T-cell (primary cell): ENCODE measurements at regions of chr20 and their contacts with region 1.

Region 1: GRCh38 chr20:50713657-50714101 is 17.7 kb upstream of the PARD6B start:
- DNase-seq: no peak
- ATAC-seq: no peak
- H3K4me3 ChIP-seq: no peak overlapping the region
- H3K4me3 Mint-ChIP-seq: no peak overlapping the region
- H3K27ac ChIP-seq: no peak overlapping the region
- H3K27ac Mint-ChIP-seq: no peak overlapping the region
- H3K4me1 ChIP-seq: no peaks in the 10 kb centered on the region
- H3K4me1 Mint-ChIP-seq: no peaks in the 10 kb centered on the region
- H3K27me3 ChIP-seq: peaks cover 0 to 28% of the 10 kb centered on the region in 2 experiments
- H3K27me3 Mint-ChIP-seq: peaks cover 26 to 37% of the 10 kb centered on the region in 2 donors

Region 2: DNA sequence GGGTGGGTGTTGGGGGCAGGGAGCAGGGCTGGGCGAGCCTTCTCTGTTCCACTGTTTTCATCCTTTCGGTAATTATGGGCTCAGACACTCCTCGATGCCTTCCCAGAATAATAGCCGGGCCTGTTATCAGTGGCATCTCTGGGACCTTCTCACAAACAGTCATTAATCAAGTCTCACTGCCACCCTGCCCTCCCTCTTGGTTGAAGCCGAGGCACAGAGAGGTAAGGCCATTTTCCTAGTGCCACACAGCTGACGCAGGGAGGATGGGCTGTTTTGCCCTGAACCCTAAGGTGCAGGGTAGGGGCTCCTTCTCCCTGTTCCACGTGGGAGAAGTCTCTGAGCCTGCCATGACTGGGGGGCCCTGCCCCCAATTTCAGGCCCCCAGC is 480.4 kb before region 1 on chr20:
- CTCF ChIA-PET with region 1: interaction called in 1 of 2 experiments, 7 read pairs
- POLR2A ChIA-PET with region 1: interaction called in 1 of 2 experiments, 10 read pairs
- DNase-seq: no peak
- ATAC-seq: no peak
- H3K4me3 ChIP-seq: no peak overlapping the region
- H3K4me3 Mint-ChIP-seq: no peak overlapping the region
- H3K27ac ChIP-seq: no peak overlapping the region
- H3K27ac Mint-ChIP-seq: no peak overlapping the region
- H3K4me1 ChIP-seq: no peaks in the 10 kb centered on the region
- H3K4me1 Mint-ChIP-seq: no peaks in the 10 kb centered on the region
- H3K27me3 ChIP-seq: peaks cover 0 to 10% of the 10 kb centered on the region in 2 experiments
- H3K27me3 Mint-ChIP-seq: no peaks in the 10 kb centered on the region

Region 3: GRCh38 chr20:50635667-50636503 is 77.8 kb before region 1 on chr20:
- CTCF ChIA-PET with region 1: no interaction called
- POLR2A ChIA-PET with region 1: no interaction called
- DNase-seq: peak in 32 of 35 experiments; percentile 2 to 60 (median 34)
- ATAC-seq: peak in 2 of 4 experiments; percentile 37 to 52
- H3K4me3 ChIP-seq: no peak overlapping the region
- H3K4me3 Mint-ChIP-seq: no peak overlapping the region
- H3K27ac ChIP-seq: no peak overlapping the region
- H3K27ac Mint-ChIP-seq: no peak overlapping the region
- H3K4me1 ChIP-seq: no peaks in the 10 kb centered on the region
- H3K4me1 Mint-ChIP-seq: peaks cover 0 to 6% (median 0%) of the 10 kb centered on the region in 3 donors
- H3K27me3 ChIP-seq: peaks cover 0 to 14% of the 10 kb centered on the region in 2 experiments
- H3K27me3 Mint-ChIP-seq: peaks cover 0 to 1% of the 10 kb centered on the region in 2 donors

Region 4: DNA sequence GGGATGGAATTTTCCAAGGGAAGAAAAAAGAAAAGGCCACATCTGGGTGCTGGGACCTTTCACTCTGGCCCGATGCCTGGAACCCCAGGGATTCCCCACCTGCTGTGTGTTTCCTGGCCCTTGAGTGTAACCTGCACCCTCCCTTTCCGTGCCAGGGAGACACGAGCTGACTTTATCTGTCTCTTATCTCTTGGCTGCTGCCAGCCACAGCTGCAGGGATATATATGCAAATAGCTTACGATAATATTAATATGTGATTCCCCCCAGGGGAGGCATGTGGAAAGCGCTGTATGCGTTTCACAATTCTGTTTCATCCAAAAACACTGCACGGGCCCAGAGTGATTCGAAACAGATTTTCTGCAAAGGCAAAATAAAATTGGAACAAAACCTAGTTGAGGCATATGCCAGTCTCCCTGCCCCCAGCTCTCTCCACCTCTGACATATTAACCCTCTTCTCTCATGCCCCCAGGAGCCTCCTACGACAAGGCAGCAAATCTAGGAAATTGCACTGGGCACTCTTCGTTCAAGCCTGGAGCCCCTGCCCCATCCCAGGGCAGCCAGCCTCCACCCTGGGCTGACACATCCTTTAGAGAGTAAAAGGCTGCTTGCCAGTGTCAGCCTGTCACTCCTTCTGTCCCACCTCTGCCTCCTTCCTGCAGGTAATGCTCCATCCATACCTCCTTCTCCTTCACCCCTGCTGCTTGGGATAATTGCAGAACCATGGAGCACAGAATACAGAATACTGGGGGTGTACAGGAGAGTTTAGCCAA is 23.6 kb before region 1 on chr20:
- CTCF ChIA-PET with region 1: no interaction called
- POLR2A ChIA-PET with region 1: no interaction called
- DNase-seq: no peak
- ATAC-seq: no peak
- H3K4me3 ChIP-seq: no peak overlapping the region
- H3K4me3 Mint-ChIP-seq: peak overlapping the region in 1 of 3 donors; percentile 51
- H3K27ac ChIP-seq: no peak overlapping the region
- H3K27ac Mint-ChIP-seq: no peak overlapping the region
- H3K4me1 ChIP-seq: peaks cover 0 to 10% of the 10 kb centered on the region in 2 experiments
- H3K4me1 Mint-ChIP-seq: peaks cover 13 to 16% (median 16%) of the 10 kb centered on the region in 3 donors
- H3K27me3 ChIP-seq: peaks cover 0 to 54% of the 10 kb centered on the region in 2 experiments
- H3K27me3 Mint-ChIP-seq: peaks cover 36 to 44% of the 10 kb centered on the region in 2 donors

Region 5: DNA sequence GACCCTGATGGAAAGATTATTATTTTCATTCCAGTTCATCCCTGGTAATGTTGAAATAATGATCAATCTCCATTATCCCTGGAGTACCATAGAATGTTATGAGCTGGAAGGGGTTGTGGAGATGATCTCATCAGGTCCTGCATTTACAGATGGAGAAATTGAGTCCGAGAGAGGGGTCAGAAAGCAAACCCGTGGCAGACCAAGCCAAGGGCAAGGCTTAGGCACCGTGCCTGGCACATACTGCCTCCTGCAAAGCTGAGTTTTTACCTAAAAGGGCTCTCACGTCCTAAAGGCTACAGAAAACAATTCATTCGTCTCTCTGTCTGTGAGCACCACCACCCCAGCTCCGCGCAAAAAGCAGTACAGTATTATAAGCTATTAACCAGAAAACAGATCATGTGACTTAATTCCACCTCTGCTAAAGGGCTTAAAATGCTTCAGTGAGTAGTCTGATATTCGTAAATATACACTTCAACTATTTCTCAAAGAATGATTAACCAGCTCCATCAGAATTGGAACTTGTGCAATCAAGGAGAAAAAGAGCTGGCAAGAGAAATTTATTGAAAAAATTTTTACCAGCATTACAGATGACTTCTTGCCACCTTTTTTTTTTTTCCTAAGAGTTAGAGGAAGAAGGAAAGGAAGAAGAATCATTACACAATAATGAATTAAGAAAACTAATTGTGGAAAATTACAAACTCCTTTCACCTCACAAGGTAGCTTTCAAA is 14.2 kb after region 1 on chr20:
- CTCF ChIA-PET with region 1: no interaction called
- POLR2A ChIA-PET with region 1: no interaction called
- DNase-seq: no peak
- ATAC-seq: no peak
- H3K4me3 ChIP-seq: no peak overlapping the region
- H3K4me3 Mint-ChIP-seq: no peak overlapping the region
- H3K27ac ChIP-seq: no peak overlapping the region
- H3K27ac Mint-ChIP-seq: no peak overlapping the region
- H3K4me1 ChIP-seq: peaks cover 5 to 17% of the 10 kb centered on the region in 2 experiments
- H3K4me1 Mint-ChIP-seq: peaks cover 10 to 16% (median 11%) of the 10 kb centered on the region in 3 donors
- H3K27me3 ChIP-seq: peaks cover 0 to 12% of the 10 kb centered on the region in 2 experiments
- H3K27me3 Mint-ChIP-seq: no peaks in the 10 kb centered on the region